ENCODE measurements at regions of chr2 and their contacts with region 1.

Region 1: GRCh38 chr2:8681786-8682692 is at the start of gene ID2:
- DNase-seq: peak; percentile 100
- H3K4me3 ChIP-seq: peak within 1 kb of the TSS; percentile 97
- H3K27ac ChIP-seq: peak within 1 kb of the TSS; percentile 91
- H3K4me1 ChIP-seq: peaks cover 39% of the 10 kb centered on the region
- CTCF ChIP-seq: no peak
- total RNA-seq, gene ID2: 439 and 498 TPM in 2 replicates

Region 2: DNA sequence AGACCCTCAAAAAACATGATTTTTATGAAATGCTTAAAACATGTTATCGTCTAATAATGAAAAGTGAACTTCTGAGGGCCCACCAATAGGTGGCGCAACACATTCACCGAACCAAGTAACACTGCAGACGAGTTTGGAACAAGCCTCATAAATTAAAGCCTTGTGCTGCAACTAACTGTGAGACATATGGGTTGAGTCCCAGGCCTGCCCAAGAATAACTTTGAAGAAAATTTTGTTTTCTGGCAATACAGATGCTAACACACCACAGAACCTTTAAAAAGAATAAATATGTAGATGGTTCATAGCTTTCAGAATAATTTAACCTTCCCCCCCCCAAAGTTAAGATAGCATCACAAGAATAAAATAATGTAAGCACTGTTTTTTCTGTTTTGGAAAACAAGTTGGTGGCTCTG is 1479.0 kb before region 1 on chr2:
- CTCF ChIA-PET with region 1: no interaction called
- POLR2A ChIA-PET with region 1: no interaction called
- intact Hi-C with region 1: loop called (anchors 5 kb)
- DNase-seq: peak; percentile 67
- H3K4me3 ChIP-seq: no peak overlapping the region
- H3K27ac ChIP-seq: no peak overlapping the region
- H3K4me1 ChIP-seq: no peaks in the 10 kb centered on the region
- CTCF ChIP-seq: peak; percentile 99

Region 3: DNA sequence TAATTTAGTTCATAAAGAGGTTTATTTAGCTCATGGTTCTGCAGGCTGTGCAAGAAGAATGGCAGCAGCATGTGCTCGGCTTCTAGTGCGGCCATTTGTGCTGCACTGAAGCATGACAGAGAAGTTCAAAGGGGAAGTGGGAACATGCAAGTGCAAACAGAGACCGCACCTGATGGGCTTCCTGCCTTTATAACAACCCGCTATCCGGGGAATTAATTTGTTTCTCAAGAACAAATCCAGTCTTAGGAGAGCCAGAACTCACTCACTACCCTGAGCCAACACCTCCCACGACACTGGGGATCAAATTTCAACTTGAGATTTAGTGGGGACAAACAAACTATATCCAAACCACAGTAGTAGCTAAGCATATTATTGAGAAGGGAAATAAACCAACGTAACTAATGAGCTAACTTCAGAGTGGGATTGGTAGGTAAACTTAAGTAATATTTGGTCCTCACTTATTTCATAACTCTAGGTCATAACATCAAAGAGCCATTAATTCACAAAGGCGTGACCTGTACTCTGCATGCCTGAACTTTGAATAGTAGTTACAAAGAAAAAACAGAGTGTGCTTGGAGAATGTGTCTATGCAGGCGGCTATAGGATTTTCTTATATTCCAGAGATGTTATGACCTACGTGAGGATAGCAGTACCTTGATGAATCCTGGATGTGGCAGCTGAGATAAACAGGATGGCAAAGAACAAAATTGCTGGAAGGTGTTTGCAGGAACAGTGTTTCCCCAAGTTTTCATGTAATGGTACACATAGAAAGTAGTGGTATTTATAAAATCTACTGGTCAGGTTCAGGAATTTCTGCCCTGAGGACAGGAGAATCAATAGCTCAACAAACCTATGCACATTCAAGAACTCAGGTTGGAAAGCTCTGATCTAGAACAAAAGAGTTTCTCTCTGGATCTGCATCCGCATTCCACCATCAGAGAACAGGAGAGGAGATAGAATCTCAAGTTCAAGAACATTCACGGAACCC is 846.1 kb before region 1 on chr2:
- CTCF ChIA-PET with region 1: no interaction called
- POLR2A ChIA-PET with region 1: no interaction called
- intact Hi-C with region 1: loop called (anchors 5 kb)
- DNase-seq: peak; percentile 96
- H3K4me3 ChIP-seq: peak overlapping the region; percentile 38
- H3K27ac ChIP-seq: peak overlapping the region; percentile 94
- H3K4me1 ChIP-seq: peaks cover 46% of the 10 kb centered on the region
- CTCF ChIP-seq: no peak

Region 4: DNA sequence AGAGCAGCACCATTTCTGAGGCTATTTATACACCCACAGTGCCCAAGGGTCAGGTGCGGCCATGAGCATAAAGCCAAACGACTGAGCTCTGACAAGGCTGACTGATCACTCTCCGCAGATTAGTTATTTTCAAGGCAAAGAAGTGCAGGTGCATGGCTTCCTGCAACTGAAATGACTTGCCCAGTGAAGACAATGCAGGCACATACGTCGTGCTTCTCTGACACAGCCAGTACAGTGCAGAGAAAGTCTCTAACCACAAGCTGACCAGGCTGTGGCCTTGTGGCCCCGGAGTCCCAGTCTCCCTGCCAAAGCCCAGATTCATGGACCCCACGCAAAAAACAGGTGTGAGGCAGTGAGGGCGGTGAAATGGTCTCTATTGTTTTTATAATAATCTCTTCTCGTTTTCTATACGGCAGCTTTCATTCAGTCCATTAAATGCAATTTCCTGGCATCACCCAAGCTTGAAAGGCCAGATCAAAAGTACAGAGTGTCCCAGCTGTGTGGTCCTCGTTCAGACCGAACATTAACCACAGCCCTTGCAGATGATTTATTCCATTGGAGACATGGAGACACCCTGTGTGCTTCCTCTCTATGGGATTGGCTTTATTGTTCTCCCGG is 447.2 kb before region 1 on chr2:
- CTCF ChIA-PET with region 1: interaction called, 8 read pairs
- POLR2A ChIA-PET with region 1: interaction called, 16 read pairs
- intact Hi-C with region 1: loop called (anchors 1 kb)
- DNase-seq: peak; percentile 97
- H3K4me3 ChIP-seq: peak overlapping the region; percentile 41
- H3K27ac ChIP-seq: peak overlapping the region; percentile 97
- H3K4me1 ChIP-seq: peaks cover 99% of the 10 kb centered on the region
- CTCF ChIP-seq: no peak

Region 5: GRCh38 chr2:8525582-8526402 is 156.2 kb before region 1 on chr2:
- CTCF ChIA-PET with region 1: interaction called, 5 read pairs
- POLR2A ChIA-PET with region 1: interaction called, 74 read pairs
- intact Hi-C with region 1: loop called (anchors 1 kb)
- DNase-seq: peak; percentile 82
- H3K4me3 ChIP-seq: peak overlapping the region; percentile 37
- H3K27ac ChIP-seq: peak overlapping the region; percentile 95
- H3K4me1 ChIP-seq: peaks cover 100% of the 10 kb centered on the region
- CTCF ChIP-seq: peak; percentile 60

Region 6: DNA sequence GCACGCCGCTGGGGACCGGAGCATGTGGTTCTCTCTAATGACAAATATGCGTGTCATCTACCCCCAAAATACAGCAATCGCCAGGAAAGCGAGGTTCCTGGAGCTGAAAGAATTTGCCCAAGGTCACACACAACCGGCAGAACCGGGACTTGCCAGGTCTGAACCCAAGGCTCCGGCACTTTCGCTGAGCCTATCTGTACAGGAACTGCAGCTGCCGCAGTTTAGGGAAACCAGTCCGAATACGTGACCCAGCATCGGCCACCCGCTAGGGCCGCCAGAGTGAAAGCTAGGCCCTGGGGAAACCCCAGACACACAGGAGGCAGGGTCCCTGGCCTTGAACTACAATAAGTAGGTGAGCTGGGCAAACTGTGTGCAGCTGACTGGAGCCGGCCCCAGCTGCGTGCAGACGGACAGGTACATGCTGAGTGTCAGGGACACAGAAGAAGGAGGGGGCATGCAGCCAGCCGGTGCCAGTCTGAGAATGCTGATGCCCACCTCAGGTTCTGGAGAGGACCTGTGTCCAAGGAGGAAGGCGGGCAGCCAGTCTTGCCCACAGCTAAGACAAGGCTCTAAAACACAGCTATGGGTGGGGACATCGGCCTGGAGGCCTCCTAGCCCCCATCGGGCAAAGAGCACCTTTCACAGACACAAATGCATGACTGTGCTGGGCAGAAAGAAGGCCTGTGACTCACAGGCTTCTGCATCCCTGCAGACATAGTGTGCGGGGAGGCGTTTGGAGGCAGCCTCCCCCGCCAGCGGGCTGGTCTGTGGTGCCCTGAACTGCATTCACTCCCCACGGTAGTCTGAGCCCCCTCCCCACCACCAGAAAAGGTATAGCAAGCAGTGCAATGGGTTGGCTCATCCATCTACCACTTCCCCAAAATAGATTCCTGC is 107.6 kb before region 1 on chr2:
- CTCF ChIA-PET with region 1: interaction called, 12 read pairs
- POLR2A ChIA-PET with region 1: interaction called, 112 read pairs
- intact Hi-C with region 1: loop called (anchors 1 kb)
- DNase-seq: peak; percentile 96
- H3K4me3 ChIP-seq: peak overlapping the region; percentile 75
- H3K27ac ChIP-seq: peak overlapping the region; percentile 98
- H3K4me1 ChIP-seq: peaks cover 95% of the 10 kb centered on the region
- CTCF ChIP-seq: 0 out of 2 replicates have a peak, but pooled peaks have one; percentile 20

Region 7: DNA sequence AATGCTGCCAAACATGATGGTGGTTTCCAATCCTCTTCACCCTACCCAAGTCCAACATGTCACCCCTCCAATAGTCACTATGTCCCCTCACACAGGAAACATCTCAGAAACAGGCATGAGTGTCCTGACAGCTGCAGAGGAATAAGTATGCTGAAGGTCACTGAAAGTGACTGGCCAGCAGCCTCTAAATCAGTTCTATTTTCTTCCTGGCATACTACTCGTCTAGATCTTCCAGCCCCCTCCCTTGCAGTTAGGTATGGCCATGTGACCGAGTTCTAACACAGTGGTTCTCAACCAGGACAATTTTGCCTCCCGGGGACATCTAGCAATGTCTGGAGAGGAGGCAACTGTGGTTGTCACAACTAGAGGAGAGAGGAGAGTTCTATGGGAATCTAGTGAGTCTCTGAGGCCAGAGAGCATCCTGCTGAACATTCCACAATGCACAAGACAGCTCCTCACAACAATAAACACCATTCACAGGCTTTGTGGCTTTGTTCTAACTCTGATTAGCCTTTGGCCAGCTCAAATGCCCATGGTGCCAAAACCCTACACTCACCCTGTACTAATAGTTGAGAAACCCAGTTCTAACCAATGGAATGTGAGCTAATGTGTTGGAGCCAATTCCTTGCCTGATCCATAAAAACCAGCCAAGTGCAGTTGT is 12.8 kb before region 1 on chr2:
- CTCF ChIA-PET with region 1: no interaction called
- POLR2A ChIA-PET with region 1: interaction called, 29 read pairs
- intact Hi-C with region 1: no loop called
- DNase-seq: no peak
- H3K4me3 ChIP-seq: no peak overlapping the region
- H3K27ac ChIP-seq: no peak overlapping the region
- H3K4me1 ChIP-seq: no peaks in the 10 kb centered on the region
- CTCF ChIP-seq: no peak

Region 8: GRCh38 chr2:9199716-9200632 is 517.9 kb after region 1 on chr2:
- CTCF ChIA-PET with region 1: no interaction called
- POLR2A ChIA-PET with region 1: no interaction called
- intact Hi-C with region 1: no loop called
- DNase-seq: no peak
- H3K4me3 ChIP-seq: no peak overlapping the region
- H3K27ac ChIP-seq: no peak overlapping the region
- H3K4me1 ChIP-seq: no peaks in the 10 kb centered on the region
- CTCF ChIP-seq: no peak